Activated B cell treated with CpG ODN at 0.5 μM for 24 hours (primary cell): ENCODE measurements at regions of chr6 and their contacts with region 1.

Region 1: GRCh38 chr6:144659202-144660182 is 374.4 kb downstream of the UTRN start:
- DNase-seq: no peak
- ATAC-seq: peak; percentile 53
- H3K4me3 Mint-ChIP-seq: peak overlapping the region; percentile 62
- H3K27ac Mint-ChIP-seq: peak overlapping the region; percentile 84
- H3K4me1 Mint-ChIP-seq: peaks cover 75% of the 10 kb centered on the region
- H3K27me3 Mint-ChIP-seq: no peaks in the 10 kb centered on the region
- CTCF ChIP-seq: no peak

Region 2: DNA sequence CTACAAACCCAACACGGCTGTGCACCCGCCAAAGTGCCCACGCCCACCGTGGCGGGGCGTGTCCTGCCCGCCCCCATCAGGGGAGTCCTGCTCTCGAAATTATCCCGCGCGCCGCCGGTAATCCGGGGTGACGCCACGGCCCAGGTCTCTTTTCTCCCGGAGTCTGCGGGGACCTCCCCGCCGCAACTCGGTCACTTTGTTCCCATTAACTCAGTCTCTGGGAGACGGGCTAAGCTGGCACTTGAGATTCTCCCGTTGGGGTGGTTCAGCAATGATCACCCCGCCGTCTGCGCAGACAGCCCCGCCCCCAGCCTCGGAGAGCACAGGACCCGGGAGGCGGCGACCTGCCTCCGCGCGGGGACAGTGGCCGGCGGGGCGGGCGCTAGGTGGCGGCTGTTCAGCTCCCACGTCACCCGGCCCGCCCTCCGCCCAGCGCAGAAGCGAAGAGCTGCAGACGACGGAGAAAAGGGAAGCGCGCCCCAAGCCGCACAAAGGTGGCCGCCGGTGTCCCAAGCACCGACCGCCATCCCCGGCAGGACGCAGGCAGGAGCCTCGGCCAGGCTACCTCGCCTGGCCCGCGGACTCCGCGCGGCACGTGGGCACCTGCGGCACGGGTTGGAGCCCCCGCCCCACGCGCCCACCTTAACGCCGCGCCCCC is 595.6 kb before region 1 on chr6:
- CTCF ChIA-PET with region 1: no interaction called
- POLR2A ChIA-PET with region 1: no interaction called
- intact Hi-C with region 1: loop called (anchors 10 kb)
- DNase-seq: peak; percentile 91
- ATAC-seq: peak; percentile 93
- H3K4me3 Mint-ChIP-seq: peak overlapping the region; percentile 94
- H3K27ac Mint-ChIP-seq: peak overlapping the region; percentile 89
- H3K4me1 Mint-ChIP-seq: peaks cover 36% of the 10 kb centered on the region
- H3K27me3 Mint-ChIP-seq: no peaks in the 10 kb centered on the region
- CTCF ChIP-seq: no peak

Region 3: GRCh38 chr6:144644776-144645175 is 14.7 kb before region 1 on chr6:
- CTCF ChIA-PET with region 1: no interaction called
- POLR2A ChIA-PET with region 1: no interaction called
- intact Hi-C with region 1: loop called (anchors 2 kb)
- DNase-seq: no peak
- ATAC-seq: no peak
- H3K4me3 Mint-ChIP-seq: no peak overlapping the region
- H3K27ac Mint-ChIP-seq: no peak overlapping the region
- H3K4me1 Mint-ChIP-seq: peaks cover 14% of the 10 kb centered on the region
- H3K27me3 Mint-ChIP-seq: no peaks in the 10 kb centered on the region
- CTCF ChIP-seq: no peak

Region 4: GRCh38 chr6:144769142-144769541 is 109.7 kb after region 1 on chr6:
- CTCF ChIA-PET with region 1: no interaction called
- POLR2A ChIA-PET with region 1: no interaction called
- intact Hi-C with region 1: no loop called
- DNase-seq: no peak
- ATAC-seq: no peak
- H3K4me3 Mint-ChIP-seq: no peak overlapping the region
- H3K27ac Mint-ChIP-seq: no peak overlapping the region
- H3K4me1 Mint-ChIP-seq: no peaks in the 10 kb centered on the region
- H3K27me3 Mint-ChIP-seq: no peaks in the 10 kb centered on the region
- CTCF ChIP-seq: no peak